HepG2 (cell line): ENCODE measurements at regions of chr3 and their contacts with region 1.

Region 1: GRCh38 chr3:142828703-142829305 is 60.1 kb downstream of the PCOLCE2 start:
- DNase-seq: peak; percentile 65
- ATAC-seq: peak; percentile 99
- H3K4me3 ChIP-seq: no peak overlapping the region
- H3K27ac ChIP-seq: no peak overlapping the region
- H3K4me1 ChIP-seq: no peaks in the 10 kb centered on the region
- H3K27me3 ChIP-seq: peaks cover 0 to 34% of the 10 kb centered on the region in 2 experiments; a peak in 1 of 5 replicates
- CTCF ChIP-seq: peak; percentile 98
- EP300 ChIP-seq: no peak
- POLR2A ChIP-seq: no peak
- RAD21 ChIP-seq: peak; percentile 96

Region 2: DNA sequence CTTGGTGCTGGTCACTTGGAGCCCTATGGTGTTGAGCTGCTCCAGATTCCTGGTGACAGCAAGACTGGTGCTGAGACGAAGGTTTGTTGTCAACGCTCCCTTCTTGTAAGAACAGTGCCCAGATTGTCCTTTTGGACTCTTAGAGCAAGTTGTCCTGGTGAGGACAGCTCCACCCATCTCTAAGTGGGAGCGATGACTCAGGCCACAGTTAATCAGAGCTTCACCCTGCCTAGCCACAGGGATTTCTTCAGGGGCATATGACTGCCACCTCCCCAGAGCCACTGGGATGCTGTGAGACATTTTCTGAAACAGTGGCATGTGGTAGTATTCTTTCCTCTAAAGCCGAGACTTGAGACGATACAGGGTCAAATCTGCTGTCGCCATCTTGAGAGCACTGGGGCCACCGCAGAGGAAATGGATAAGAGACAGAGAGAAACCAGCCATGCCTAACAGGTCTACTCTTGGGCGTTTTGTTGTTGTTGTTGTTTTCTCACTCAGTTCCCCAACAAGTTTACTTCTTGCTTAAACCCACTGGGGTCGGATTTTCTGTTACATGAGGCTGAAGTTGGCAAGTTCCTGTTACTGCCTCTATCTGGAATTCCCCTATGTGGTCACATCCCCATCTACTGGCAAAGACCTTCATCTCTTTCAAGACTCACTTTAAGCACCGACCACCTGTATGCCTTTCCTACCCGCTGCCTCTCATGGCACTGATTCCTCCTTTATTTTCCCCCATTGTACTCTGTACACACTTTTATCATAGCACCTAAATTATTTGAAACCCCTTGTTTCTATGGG is 76.0 kb after region 1 on chr3:
- CTCF ChIA-PET with region 1: no interaction called
- POLR2A ChIA-PET with region 1: no interaction called
- in situ Hi-C with region 1: no loop called
- intact Hi-C with region 1: loop called (anchors 5 kb)
- DNase-seq: peak; percentile 15
- ATAC-seq: peak; percentile 82
- H3K4me3 ChIP-seq: no peak overlapping the region
- H3K27ac ChIP-seq: no peak overlapping the region
- H3K4me1 ChIP-seq: peaks cover 6% of the 10 kb centered on the region; the same call in 1 of the 2 replicates
- H3K27me3 ChIP-seq: no peaks in the 10 kb centered on the region; a peak in 3 of 5 replicates
- CTCF ChIP-seq: peak; percentile 64
- EP300 ChIP-seq: no peak
- POLR2A ChIP-seq: no peak
- RAD21 ChIP-seq: peak; percentile 51; the same call in 1 of the 2 replicates

Region 3: DNA sequence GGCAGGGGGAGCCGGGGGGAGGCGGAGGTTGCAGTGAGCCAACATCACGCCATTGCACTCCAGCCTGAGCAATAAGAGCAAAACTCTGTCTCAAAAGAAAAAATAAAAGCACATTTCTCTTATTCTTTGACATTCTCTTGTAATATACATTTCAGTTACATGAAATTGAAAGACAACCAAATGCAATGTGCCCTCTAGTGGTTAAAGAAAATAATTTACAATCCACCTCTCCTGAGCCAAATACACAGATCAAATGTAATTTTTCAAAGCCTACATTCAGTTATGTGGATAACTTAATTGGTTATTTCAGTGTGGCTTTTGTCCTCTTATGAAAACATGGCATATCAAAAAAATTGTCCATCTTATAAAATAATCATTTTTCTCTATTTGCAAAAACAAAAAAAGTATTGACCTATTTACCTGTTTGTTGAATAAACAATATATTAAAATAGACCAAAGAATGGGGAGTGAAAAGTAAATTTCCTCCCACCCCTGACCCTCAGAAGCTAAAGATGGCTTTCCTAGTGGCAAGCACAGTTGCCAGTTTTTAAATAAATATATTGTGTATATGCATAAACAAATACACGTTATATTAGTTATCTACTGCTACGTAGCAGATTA is 158.4 kb after region 1 on chr3:
- CTCF ChIA-PET with region 1: interaction called, 11 read pairs
- POLR2A ChIA-PET with region 1: no interaction called
- in situ Hi-C with region 1: loop called (anchors 5 kb)
- intact Hi-C with region 1: loop called (anchors 2 kb)
- DNase-seq: peak; percentile 18
- ATAC-seq: peak; percentile 20; the same call in 1 of the 3 replicates
- H3K4me3 ChIP-seq: no peak overlapping the region
- H3K27ac ChIP-seq: no peak overlapping the region
- H3K4me1 ChIP-seq: peaks cover 40% of the 10 kb centered on the region
- H3K27me3 ChIP-seq: peaks cover 0 to 1% of the 10 kb centered on the region in 2 experiments; a peak in 1 of 5 replicates
- CTCF ChIP-seq: peak; percentile 60
- EP300 ChIP-seq: no peak
- POLR2A ChIP-seq: no peak
- RAD21 ChIP-seq: peak; percentile 49; the same call in 1 of the 2 replicates

Region 4: DNA sequence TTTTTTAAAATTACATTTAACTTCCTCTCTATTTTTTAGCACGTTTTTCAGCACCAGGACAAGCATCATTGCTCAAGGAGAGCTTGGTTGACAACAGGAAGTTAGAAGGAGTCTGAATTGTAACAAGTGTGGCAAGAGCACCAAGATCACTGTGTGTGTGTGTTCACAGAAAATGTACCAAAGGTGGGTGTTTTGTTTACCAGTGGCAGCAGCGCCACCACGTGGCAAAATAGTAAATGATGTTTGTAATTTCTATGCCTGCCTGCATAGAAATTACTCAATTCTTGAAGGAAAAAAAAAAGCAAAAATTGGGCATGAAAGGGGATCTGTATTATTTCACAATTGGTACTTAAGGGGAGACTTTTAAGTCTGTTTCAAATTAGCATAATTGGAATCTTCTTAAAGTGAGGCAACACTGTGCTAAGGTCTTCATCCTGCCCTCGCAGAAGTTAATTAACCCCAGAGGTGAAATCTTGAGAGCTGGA is 165.2 kb after region 1 on chr3:
- CTCF ChIA-PET with region 1: interaction called, 36 read pairs
- POLR2A ChIA-PET with region 1: no interaction called
- in situ Hi-C with region 1: loop called (anchors 5 kb)
- intact Hi-C with region 1: loop called (anchors 1 kb)
- DNase-seq: peak; percentile 66
- ATAC-seq: peak; percentile 66
- H3K4me3 ChIP-seq: no peak overlapping the region
- H3K27ac ChIP-seq: no peak overlapping the region
- H3K4me1 ChIP-seq: peaks cover 53% of the 10 kb centered on the region
- H3K27me3 ChIP-seq: peaks cover 0 to 1% of the 10 kb centered on the region in 2 experiments; a peak in 1 of 5 replicates
- CTCF ChIP-seq: peak; percentile 86
- EP300 ChIP-seq: no peak
- POLR2A ChIP-seq: no peak
- RAD21 ChIP-seq: peak; percentile 67; the same call in 1 of the 2 replicates